ENCODE measurements at regions of chr18 and their contacts with region 1.

Region 1: GRCh38 chr18:62566199-62566598 is 43.4 kb downstream of the ZCCHC2 start:
- DNase-seq: no peak
- ATAC-seq: no peak

Region 2: GRCh38 chr18:62425465-62426195 is 140.6 kb before region 1 on chr18:
- intact Hi-C with region 1: loop called (anchors 5 kb)
- DNase-seq: no peak
- ATAC-seq: peak; percentile 93

Region 3: GRCh38 chr18:62919109-62919838 is 353.1 kb after region 1 on chr18:
- intact Hi-C with region 1: no loop called
- DNase-seq: no peak
- ATAC-seq: no peak